ENCODE measurements at regions of chr22 and their contacts with region 1.

Region 1: DNA sequence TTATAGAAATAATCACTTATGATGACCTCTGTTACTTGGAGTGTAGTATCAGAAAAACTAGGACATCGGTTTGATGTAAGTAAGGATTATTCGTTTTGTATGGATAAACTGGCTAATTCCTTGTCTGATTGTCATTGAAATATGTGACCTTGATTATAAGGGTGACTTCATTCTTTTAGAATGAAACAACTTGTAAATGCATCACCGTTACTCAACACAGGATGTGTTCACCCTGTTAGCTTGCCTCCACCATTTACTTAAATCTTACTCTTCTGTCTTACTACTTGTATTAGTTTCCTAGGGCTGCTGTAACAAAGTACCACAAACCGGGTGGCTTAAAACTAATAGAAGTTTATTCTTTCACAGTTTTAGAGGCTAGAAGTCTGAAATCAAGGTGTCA is 7.9 kb downstream of the SFI1 start:
- DNase-seq: no peak
- ATAC-seq: no peak
- H3K4me3 ChIP-seq: no peak overlapping the region
- H3K4me3 Mint-ChIP-seq: no peak overlapping the region
- H3K27ac ChIP-seq: no peak overlapping the region
- H3K27ac Mint-ChIP-seq: no peak overlapping the region
- H3K4me1 ChIP-seq: peaks cover 0 to 33% of the 10 kb centered on the region in 2 experiments
- H3K4me1 Mint-ChIP-seq: peaks cover 62 to 73% (median 73%) of the 10 kb centered on the region in 3 donors
- H3K27me3 ChIP-seq: no peaks in the 10 kb centered on the region
- H3K27me3 Mint-ChIP-seq: no peaks in the 10 kb centered on the region

Region 2: GRCh38 chr22:31526270-31526669 is 22.0 kb after region 1 on chr22:
- CTCF ChIA-PET with region 1: no interaction called
- POLR2A ChIA-PET with region 1: interaction called in 1 of 2 experiments, 10 read pairs
- DNase-seq: peak in 2 of 35 experiments; percentile 1 to 31
- ATAC-seq: peak in 1 of 4 experiments; percentile 43
- H3K4me3 ChIP-seq: no peak overlapping the region
- H3K4me3 Mint-ChIP-seq: no peak overlapping the region
- H3K27ac ChIP-seq: no peak overlapping the region
- H3K27ac Mint-ChIP-seq: peak overlapping the region; percentile 36 to 40
- H3K4me1 ChIP-seq: peaks cover 0 to 22% of the 10 kb centered on the region in 2 experiments
- H3K4me1 Mint-ChIP-seq: peaks cover 37 to 54% (median 50%) of the 10 kb centered on the region in 3 donors
- H3K27me3 ChIP-seq: no peaks in the 10 kb centered on the region
- H3K27me3 Mint-ChIP-seq: no peaks in the 10 kb centered on the region

Region 3: DNA sequence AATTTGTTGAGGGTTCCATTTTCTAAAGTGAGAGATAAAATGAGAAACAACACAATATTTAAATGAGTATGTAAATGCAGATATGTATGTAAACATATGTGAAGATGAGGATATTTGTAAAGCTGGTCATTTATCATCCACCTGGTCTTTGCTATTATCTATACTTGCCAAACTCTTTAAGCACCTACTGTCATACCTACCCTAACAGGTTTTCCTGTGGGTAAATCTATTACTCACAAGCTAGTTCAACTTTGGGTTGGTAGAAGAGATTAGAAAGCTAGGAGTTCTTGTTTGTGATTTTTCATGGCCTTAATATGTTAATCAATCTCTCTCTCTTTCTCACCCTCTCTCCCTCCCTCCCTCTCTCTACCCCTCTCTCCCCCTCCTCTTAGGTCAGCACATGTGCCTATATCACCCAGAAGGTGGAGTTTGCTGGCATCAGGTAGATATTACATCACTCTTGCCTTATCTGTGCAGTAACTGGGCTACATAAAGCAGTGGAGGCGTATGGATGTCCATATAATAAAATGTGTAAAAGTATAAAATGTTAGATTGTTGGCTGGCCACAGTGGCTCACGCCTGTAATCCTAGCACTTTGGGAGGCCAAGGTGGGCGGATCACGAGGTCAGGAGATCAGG is 264.3 kb after region 1 on chr22:
- CTCF ChIA-PET with region 1: no interaction called
- POLR2A ChIA-PET with region 1: no interaction called
- DNase-seq: no peak
- ATAC-seq: no peak
- H3K4me3 ChIP-seq: no peak overlapping the region
- H3K4me3 Mint-ChIP-seq: no peak overlapping the region
- H3K27ac ChIP-seq: no peak overlapping the region
- H3K27ac Mint-ChIP-seq: no peak overlapping the region
- H3K4me1 ChIP-seq: no peaks in the 10 kb centered on the region
- H3K4me1 Mint-ChIP-seq: no peaks in the 10 kb centered on the region
- H3K27me3 ChIP-seq: no peaks in the 10 kb centered on the region
- H3K27me3 Mint-ChIP-seq: no peaks in the 10 kb centered on the region